ENCODE measurements at regions of chr14 and their contacts with region 1.

Region 1: DNA sequence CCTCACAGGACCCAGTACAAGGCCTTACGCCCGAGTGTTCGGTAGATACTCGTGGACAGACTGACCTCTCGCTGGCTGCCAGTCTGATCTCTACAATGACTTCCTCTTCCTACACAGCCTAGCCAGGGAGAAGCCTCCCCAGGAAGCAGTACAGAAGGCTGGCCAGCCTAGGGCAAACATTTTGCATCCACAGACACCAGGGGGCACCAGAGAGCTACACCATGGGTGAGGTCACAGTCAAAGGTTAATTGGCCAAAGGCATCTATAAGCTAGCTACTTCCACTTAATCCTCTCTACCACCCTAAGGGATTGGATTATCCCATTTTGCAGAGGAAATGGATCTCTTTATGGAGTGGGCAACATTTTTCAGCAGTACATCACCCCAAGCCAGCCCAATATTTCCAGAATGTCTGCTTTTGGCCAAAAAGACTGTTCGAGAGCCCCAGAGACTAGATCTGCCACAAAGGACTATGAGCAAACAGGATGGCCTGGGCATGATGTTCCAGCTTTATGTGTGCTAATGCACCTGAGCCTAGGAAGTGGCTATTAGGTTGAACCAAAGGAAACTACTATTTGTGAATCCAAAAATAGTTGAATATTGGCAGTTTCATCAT is 14.6 kb upstream of the PNMA1 start:
- DNase-seq: peak; percentile 94
- H3K4me3 ChIP-seq: no peak overlapping the region
- H3K27ac ChIP-seq: peak overlapping the region in 7 of 8 donors; percentile 24 to 82 (median 72)
- H3K4me1 ChIP-seq: peaks cover 28 to 95% (median 78%) of the 10 kb centered on the region in 6 donors
- H3K27me3 ChIP-seq: no peaks in the 10 kb centered on the region
- CTCF ChIP-seq: peak; percentile 92 to 99 (median 96)
- POLR2A ChIP-seq: no peak

Region 2: GRCh38 chr14:73655851-73656250 is 73.0 kb before region 1 on chr14:
- intact Hi-C with region 1: no loop called
- DNase-seq: no peak
- H3K4me3 ChIP-seq: no peak overlapping the region
- H3K27ac ChIP-seq: no peak overlapping the region
- H3K4me1 ChIP-seq: no peaks in the 10 kb centered on the region
- H3K27me3 ChIP-seq: no peaks in the 10 kb centered on the region
- CTCF ChIP-seq: no peak
- POLR2A ChIP-seq: no peak

Region 3: DNA sequence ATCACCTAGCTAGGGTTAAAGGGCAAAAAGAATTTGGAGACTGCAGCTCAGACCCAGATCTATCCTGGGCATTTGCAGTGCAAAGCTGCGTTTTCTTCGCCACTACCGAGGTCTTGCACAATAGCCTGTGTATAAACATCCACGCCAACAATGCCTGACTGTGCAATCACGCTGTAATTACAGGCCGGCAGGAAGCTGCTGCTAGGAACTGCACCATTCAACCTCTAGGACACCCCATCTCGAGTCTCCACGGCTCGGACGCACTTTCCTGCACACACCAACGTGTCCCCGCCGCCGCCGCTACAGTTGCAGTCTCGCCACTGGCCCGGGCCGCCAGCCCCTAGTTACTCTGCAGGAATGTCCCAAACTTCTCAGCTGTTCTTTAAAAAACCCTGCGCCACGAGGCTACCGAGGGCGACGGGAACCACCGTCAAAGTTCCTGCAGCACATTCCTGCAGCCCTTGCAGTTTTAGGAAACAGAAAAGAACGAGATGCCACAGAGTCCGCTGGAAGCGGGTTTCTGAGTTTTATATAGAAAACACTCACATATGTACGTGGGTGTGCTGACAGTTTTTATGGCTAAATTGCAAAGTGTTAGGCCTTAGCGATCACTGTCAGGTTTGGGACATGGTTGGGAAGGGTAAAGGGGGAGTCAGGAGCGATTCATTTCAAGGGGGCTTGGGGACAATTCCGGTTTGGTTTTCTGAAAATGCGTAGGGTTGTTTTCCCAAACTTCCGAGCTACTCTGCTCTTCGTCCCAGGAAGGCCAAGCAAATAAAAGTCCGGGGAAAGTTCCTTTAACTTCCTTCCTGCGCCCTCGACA is 57.3 kb after region 1 on chr14:
- intact Hi-C with region 1: loop called (anchors 10 kb)
- DNase-seq: peak; percentile 92
- H3K4me3 ChIP-seq: peak overlapping the region; percentile 68 to 94 (median 72)
- H3K27ac ChIP-seq: peak overlapping the region; percentile 94 to 99 (median 97)
- H3K4me1 ChIP-seq: peaks cover 47 to 94% (median 73%) of the 10 kb centered on the region in 6 donors
- H3K27me3 ChIP-seq: no peaks in the 10 kb centered on the region
- CTCF ChIP-seq: peak in 8 of 11 experiments; percentile 14 to 72 (median 54)
- POLR2A ChIP-seq: peak in 1 of 3 donors; percentile 73

Region 4: DNA sequence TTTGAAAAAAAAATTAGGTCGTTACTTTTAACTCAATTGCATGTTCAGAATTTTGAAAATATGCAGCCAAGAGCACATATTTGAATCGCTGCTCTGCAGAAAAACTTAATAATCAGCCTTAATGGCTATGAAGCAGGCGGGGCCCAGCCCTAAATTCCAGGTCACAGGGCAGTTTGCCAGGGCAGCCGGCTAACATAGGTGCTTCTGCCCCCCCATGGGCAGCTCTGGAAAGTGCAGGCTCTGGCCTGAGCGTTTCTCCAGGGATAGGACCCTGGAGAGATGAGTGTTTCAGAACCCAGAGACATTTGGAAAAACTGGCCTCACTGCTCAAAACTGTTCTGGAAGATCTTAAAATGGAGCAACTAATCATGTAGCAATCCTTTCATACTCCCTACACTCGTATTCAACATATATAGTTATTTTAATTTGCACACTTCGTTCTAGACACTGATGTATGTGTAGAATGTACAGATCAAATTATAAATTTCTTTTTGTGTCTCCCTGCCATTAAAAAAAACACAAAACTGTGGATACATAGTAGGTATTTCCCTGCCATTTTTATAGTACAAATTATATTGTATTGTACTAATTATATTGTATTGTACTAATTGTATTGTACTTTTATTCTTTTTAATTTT is 96.8 kb after region 1 on chr14:
- intact Hi-C with region 1: loop called (anchors 5 kb)
- DNase-seq: peak; percentile 95
- H3K4me3 ChIP-seq: no peak overlapping the region
- H3K27ac ChIP-seq: no peak overlapping the region
- H3K4me1 ChIP-seq: peaks cover 8 to 14% (median 11%) of the 10 kb centered on the region in 6 donors
- H3K27me3 ChIP-seq: no peaks in the 10 kb centered on the region
- CTCF ChIP-seq: peak; percentile 86 to 97 (median 91)
- POLR2A ChIP-seq: no peak